Mammary epithelial cell (primary cell): ENCODE measurements at regions of chr7 and their contacts with region 1.

Region 1: DNA sequence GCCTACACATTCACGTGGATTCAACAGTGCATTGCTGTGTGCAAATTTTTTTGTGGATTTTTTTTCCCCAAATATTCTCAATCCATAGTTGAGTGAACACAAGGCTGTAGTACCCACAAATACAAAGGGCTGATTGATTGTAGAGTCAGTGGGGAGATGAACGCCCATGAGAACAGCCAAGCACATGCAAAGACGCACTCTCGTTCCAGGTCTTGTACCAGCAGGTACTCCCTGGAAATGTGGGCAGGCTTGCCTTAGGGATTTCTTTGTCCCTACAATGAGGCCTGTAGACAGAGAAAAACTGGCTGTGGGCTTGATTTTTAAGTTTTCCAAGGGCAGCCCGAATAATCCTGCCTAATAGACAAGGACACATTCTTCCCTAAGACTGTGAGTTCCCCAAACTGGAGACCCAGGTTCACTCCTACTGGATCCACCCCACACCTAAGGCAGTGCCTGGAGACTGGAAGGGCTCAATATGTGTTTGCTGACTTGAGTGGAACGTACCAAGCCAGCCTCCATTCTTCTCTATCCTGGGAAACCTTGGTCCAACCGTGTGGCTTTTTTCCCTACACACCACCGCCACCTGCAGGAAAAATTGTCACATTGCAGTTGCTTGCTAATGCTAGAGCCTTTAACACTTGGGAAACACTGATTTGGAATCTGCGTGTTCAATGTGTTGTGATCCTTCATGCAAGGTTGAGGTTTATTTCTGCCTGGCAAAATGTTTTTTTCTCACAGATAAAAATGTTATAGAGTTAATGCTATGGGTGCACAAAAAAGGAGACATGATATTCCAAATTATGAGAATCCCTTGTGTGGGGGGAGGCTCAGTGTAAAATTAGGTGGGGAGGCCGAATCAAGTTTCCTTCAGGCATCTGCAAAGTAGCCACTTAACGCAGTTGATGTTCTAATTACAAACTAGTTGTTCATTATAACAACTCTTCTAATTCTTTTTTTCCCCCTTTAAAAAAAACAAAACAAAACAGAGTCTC is 49.3 kb downstream of the PPP1R17 start:
- DNase-seq: peak; percentile 68
- H3K4me3 ChIP-seq: no peak overlapping the region
- H3K27ac ChIP-seq: peak overlapping the region; percentile 37
- H3K4me1 ChIP-seq: peaks cover 20% of the 10 kb centered on the region
- H3K27me3 ChIP-seq: no peaks in the 10 kb centered on the region
- CTCF ChIP-seq: peak; percentile 94

Region 2: DNA sequence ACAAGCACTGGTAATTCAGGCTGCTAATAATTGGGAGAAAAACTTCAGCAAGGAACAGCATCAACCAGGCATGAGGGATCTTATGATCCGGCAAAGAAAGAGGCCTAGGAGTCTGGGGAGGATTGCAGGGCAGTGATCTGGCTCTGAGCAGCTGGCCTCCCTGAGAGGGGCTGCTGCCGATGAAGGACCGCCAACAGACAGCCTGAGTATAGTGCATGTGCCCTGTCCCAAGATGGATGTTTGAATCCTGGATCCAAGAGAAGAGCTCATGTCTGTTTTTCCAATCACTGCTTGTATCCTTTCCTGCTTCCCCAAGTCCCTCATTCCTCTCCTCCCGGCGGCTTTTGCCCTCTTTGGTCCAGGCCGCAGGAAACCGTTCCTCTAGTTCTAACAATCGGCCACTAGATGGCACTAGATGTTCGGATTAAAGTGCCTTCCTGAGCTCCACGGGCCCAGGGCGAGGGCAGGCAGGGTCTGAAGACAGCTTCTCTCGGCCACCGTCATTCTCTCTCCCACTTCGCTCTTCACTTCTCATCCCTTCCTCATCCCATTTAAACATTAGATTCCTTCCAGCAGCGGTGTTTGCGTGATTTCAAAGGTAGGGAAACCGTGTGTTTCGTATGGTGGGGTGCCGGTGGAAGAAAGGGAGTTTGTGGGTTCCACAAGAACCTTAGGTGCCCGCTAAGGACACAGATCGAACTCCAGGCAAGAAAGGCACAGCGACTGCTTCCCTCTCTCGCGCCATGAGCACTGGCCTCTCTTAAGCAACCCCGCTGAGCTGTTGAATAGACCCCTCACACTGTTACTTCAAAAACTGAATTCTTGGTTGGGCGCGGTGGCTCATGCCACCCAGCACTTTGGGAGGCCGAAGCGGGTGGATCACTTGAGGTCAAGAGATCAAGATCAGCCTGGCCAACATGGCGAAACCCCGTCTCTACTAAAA is 601.8 kb before region 1 on chr7:
- CTCF ChIA-PET with region 1: no interaction called
- dilution Hi-C with region 1: loop called (anchors 25 kb)
- in situ Hi-C with region 1: loop called in 1 of 2 experiments (anchors 10 kb)
- intact Hi-C with region 1: loop called (anchors 1 kb)
- DNase-seq: peak; percentile 52
- H3K4me3 ChIP-seq: no peak overlapping the region
- H3K27ac ChIP-seq: no peak overlapping the region
- H3K4me1 ChIP-seq: no peaks in the 10 kb centered on the region
- H3K27me3 ChIP-seq: no peaks in the 10 kb centered on the region
- CTCF ChIP-seq: peak; percentile 68

Region 3: DNA sequence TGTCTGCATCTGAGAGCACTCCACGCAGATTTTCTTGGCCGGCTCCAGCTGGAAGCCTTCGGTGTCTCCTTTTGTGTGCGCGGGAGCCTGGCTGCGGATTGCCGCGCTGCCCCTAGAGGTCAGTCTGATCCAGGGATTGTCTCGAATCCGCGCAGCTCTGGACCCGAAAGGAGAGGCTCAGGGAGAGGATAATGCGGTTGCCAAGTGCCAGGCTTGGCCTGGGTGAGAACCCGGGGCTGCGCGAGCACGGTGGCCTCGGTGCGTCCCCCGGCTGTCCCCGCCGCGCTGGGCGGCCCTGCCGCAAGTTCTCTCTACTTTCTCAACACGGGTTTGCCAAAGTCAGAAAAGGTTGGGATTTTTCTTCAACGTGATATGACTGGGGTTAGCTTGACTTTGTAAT is 543.3 kb before region 1 on chr7:
- CTCF ChIA-PET with region 1: no interaction called
- dilution Hi-C with region 1: no loop called
- in situ Hi-C with region 1: no loop called
- intact Hi-C with region 1: loop called (anchors 1 kb)
- DNase-seq: peak; percentile 52
- H3K4me3 ChIP-seq: no peak overlapping the region
- H3K27ac ChIP-seq: no peak overlapping the region
- H3K4me1 ChIP-seq: no peaks in the 10 kb centered on the region
- H3K27me3 ChIP-seq: no peaks in the 10 kb centered on the region
- CTCF ChIP-seq: peak; percentile 83 to 93

Region 4: GRCh38 chr7:31443457-31443856 is 292.8 kb before region 1 on chr7:
- CTCF ChIA-PET with region 1: no interaction called
- dilution Hi-C with region 1: no loop called
- in situ Hi-C with region 1: loop called in 1 of 2 experiments (anchors 10 kb)
- intact Hi-C with region 1: loop called (anchors 1 kb)
- DNase-seq: peak; percentile 46
- H3K4me3 ChIP-seq: no peak overlapping the region
- H3K27ac ChIP-seq: no peak overlapping the region
- H3K4me1 ChIP-seq: no peaks in the 10 kb centered on the region
- H3K27me3 ChIP-seq: no peaks in the 10 kb centered on the region
- CTCF ChIP-seq: peak; percentile 76 to 81

Region 5: DNA sequence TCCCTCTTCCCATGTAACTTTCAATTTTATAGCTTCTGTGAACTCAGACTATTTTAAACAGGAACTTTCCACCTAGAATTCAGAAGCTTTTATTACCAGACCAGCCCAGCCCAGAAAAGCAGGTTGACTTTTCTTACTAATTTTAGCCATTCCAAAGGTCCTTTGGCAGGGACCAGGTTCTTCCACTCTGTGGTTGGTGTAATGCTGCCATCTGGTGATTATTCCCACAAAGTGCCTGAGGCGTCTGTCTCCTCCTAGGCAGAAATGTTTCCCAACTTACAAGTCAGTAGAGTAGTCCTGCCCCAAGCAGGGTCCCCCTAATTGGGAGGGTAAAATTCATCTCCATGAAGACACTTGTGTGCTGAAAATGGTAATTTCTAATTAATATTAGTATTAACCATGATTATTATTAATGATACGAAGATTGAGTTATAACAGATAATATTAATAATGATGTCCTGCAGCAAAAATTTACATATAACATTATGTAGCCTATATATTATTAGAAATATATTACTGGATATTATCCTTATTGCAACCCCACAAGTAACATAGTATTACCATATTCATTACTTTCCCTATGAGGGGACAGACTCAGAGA is 102.3 kb before region 1 on chr7:
- CTCF ChIA-PET with region 1: no interaction called
- dilution Hi-C with region 1: no loop called
- in situ Hi-C with region 1: no loop called
- intact Hi-C with region 1: loop called (anchors 1 kb)
- DNase-seq: peak; percentile 48
- H3K4me3 ChIP-seq: no peak overlapping the region
- H3K27ac ChIP-seq: no peak overlapping the region
- H3K4me1 ChIP-seq: no peaks in the 10 kb centered on the region
- H3K27me3 ChIP-seq: no peaks in the 10 kb centered on the region
- CTCF ChIP-seq: peak; percentile 59 to 72

Region 6: DNA sequence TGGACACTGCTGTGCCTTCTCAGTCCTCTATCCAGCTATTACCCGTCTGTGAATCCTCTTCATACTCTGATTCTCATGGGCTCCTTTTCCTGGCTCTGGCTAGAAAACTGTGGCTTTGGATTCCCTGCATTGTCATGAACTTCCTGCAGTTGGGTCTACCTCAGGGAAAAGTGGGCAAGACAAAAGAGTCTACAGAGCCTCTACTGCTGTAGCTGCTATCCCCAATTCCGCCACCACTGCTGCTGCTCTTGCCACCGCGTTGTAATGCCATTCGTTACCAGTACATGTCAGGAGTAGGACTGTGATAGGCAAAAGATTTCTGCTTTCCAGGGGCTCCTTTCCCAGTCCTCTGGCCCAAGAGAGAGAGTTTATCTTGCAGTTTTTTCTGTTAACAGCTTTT is 73.2 kb before region 1 on chr7:
- CTCF ChIA-PET with region 1: no interaction called
- dilution Hi-C with region 1: no loop called
- in situ Hi-C with region 1: loop called in 1 of 2 experiments (anchors 5 kb)
- intact Hi-C with region 1: no loop called
- DNase-seq: no peak
- H3K4me3 ChIP-seq: no peak overlapping the region
- H3K27ac ChIP-seq: no peak overlapping the region
- H3K4me1 ChIP-seq: no peaks in the 10 kb centered on the region
- H3K27me3 ChIP-seq: no peaks in the 10 kb centered on the region
- CTCF ChIP-seq: peak in 1 of 2 donors; percentile 1